AG04450 (cell line): ENCODE measurements at regions of chr17 and their contacts with region 1.

Region 1: DNA sequence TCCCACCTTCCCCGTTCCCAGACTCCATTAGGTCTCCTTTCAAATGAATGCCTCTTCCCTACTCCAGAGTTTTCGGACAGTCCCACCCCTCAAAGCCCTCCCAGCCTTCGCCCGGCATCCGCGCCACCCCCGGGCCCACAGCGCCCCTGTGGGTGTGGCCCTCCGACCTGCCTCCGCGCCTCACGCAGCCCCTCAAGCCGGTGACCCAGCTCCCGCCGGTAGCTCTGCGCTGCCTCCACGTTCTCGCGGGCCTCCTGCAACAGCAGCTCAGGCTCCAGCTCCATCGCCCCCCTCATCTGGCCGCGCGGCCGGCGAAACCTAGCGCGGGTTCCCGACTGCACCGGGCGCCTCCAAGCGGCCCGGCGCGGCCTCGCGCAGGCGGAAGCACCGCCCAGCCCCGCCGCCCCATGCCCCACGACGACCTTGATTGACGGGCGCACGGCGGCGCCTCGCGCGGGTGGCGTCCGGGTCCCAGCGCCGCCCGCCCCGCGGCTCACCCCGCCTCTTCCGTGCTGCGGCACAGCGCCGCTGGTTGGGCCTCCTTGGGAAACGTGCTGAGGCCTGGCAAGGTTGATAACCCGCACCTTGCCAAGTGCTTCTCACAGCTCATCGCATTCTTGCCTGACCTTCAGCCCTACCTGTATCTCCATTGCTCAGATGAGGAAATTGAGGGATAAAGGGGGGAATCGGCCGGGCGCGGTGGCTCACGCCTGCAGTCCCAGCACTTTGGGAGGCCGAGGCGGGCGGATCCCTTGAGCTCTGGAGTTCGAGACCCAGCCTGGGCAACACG is at the start of gene CRLF3:
- DNase-seq: peak; percentile 54
- H3K4me3 ChIP-seq: peak within 1 kb of the TSS; percentile 90
- H3K27ac ChIP-seq: peak within 1 kb of the TSS; percentile 61
- H3K27me3 ChIP-seq: no peaks in the 10 kb centered on the region
- CTCF ChIP-seq: peak; percentile 49
- polyA plus RNA-seq, gene CRLF3: 7.9 and 10.1 TPM in 2 replicates

Region 2: DNA sequence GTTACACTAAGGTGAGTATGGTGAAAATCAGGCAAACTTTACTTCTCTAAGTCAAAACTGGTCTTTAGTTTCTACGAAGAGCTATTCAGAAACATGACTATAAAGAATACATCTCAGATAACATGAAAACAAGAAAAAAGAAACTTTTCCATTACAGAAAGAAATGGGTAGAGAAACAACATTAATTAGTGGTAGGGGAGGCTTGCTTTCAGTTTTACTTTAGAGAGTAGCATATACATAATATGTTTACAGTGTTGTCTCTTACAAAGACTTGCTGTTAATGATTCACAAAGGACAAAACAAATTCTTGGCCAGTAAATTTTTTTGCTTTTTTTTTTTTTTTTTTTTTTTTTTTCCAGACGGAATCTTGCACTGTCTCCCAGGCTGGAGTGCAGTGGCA is 34.3 kb before region 1 on chr17:
- CTCF ChIA-PET with region 1: no interaction called
- POLR2A ChIA-PET with region 1: interaction called, 22 read pairs
- DNase-seq: no peak
- H3K4me3 ChIP-seq: no peak overlapping the region
- H3K27ac ChIP-seq: no peak overlapping the region
- H3K27me3 ChIP-seq: no peaks in the 10 kb centered on the region
- CTCF ChIP-seq: no peak

Region 3: GRCh38 chr17:30840771-30841170 is 16.2 kb after region 1 on chr17:
- CTCF ChIA-PET with region 1: interaction called, 11 read pairs
- POLR2A ChIA-PET with region 1: interaction called, 5 read pairs
- DNase-seq: no peak
- H3K4me3 ChIP-seq: no peak overlapping the region
- H3K27ac ChIP-seq: no peak overlapping the region
- H3K27me3 ChIP-seq: no peaks in the 10 kb centered on the region
- CTCF ChIP-seq: no peak